Body of pancreas (tissue), 4 donors: ENCODE measurements at regions of chr6 and their contacts with region 1.

Region 1: DNA sequence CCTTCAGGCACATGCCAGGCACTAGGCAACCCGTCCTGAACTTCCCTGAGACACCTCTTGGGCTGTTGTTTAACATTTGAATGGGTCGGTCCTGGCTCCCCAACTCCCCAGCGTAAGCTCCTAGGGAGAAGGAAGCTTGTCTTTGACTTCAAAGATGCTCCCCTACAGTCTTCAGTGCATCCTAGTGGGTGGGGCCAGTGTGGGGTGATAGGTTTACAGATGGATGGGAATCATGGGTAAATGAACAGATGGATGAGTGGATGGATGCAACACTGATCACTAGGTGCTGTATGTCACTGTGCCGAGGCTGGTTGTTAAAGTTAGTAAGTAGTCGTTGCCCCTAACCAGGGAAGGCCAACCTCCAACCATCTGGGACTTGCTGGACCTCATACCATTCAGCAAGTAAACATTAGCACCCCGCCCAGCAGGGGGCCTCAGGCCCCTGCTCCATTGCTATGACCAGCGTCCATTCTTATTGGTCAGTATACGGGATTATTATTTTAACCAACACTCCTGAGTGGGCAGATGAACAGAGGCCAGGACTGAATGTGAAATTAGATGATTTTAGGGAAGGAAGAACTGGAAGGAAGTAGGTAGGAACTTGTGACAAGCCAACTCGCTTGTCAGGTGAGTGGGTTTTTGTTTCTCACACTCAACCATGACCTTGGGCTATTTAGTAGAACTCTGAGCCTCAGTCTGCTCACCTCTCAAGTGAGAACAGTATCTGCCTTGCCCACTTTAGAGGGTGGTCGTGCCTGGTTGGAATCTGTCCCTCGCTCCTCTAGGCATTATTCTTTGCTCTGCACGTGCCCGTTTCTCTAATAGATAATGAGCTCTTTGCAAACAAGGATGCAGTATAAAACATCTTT is 82.9 kb upstream of the FOXP4 start:
- DNase-seq: peak; percentile 79 to 88 (median 82)
- ATAC-seq: peak; percentile 92
- H3K4me3 ChIP-seq: no peak overlapping the region
- H3K27ac ChIP-seq: no peak overlapping the region
- H3K4me1 ChIP-seq: no peaks in the 10 kb centered on the region
- H3K27me3 ChIP-seq: no peaks in the 10 kb centered on the region
- CTCF ChIP-seq: peak; percentile 55 to 87 (median 73)
- POLR2A ChIP-seq: no peak

Region 2: DNA sequence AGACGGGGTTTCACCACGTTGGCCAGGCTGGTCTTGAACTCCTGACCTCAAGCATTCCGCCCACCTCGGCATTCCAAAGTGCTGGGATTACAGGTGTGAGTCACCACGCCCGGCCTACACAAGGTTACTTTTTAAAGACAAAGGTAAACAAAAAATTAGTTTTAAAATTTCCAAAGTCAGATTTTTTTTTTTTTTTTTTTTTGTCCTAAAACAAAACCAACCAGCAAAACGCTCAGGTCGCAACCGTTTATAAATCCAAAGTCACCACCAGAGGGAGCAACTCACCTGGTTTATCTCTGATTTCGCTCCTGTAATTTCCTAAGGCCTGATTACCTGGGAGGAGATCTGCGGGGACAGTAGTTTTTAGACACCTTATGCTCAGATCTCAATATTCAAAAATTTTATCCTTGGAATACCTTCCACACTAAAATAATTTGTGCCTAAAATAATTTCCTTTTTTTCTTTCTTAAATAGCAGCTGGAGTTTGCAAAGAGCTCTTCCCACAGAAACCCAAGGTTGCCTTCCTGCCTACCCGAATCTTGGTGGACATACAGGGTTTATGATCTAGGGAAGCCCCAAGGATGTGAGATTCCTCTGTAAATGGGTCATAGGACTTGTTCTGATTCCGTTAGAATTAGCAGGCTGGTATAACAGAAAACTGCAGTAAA is 157.0 kb before region 1 on chr6:
- intact Hi-C with region 1: no loop called
- DNase-seq: peak; percentile 57 to 74 (median 68)
- ATAC-seq: peak; percentile 66
- H3K4me3 ChIP-seq: no peak overlapping the region
- H3K27ac ChIP-seq: no peak overlapping the region
- H3K4me1 ChIP-seq: no peaks in the 10 kb centered on the region
- H3K27me3 ChIP-seq: no peaks in the 10 kb centered on the region
- CTCF ChIP-seq: peak; percentile 43 to 74 (median 62)
- POLR2A ChIP-seq: no peak

Region 3: GRCh38 chr6:41591859-41592502 is 128.7 kb after region 1 on chr6:
- intact Hi-C with region 1: loop called (anchors 5 kb)
- DNase-seq: peak; percentile 71 to 82 (median 78)
- ATAC-seq: peak; percentile 75
- H3K4me3 ChIP-seq: no peak overlapping the region
- H3K27ac ChIP-seq: no peak overlapping the region
- H3K4me1 ChIP-seq: no peaks in the 10 kb centered on the region
- H3K27me3 ChIP-seq: no peaks in the 10 kb centered on the region
- CTCF ChIP-seq: peak; percentile 85 to 98 (median 91)
- POLR2A ChIP-seq: no peak

Region 4: DNA sequence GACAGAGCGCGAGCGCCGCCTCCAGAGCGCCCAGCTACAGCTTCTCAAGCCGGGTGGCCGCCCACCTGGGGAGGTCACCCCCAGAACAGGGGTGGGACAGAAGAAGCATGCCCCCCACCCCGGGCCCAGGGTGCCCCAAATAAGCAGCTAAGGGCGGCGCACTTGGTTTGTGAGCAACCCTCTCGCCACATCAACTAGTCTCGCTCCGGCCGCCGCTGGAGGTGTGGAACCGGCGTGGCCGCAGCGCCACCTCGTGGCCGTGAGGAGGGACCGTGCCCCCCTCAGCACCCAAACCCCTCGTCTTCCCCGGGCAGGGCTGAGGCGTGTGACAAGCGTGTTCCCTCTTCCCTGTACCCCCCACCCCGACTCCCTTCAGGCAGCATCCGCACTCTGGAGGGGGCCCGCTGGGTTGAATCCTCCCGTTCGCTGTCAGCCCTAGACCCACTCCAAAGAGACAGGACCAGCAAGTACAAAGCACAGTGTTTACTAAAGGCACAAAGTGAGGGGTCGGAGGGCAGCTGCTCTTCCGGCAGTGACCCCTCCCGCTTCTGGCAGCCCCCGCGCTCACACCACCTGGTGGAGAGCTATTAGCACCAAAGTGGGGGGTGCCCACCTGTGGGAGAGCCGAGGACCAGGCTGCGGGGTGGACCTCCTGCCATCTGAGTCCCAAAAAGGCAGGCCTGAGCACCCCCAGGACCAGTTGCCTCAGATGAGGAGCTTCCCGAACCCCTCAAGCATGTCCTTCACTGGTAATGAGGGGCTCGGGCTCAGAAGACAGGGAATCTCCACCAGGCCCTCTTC is 220.4 kb after region 1 on chr6:
- intact Hi-C with region 1: loop called (anchors 10 kb)
- DNase-seq: peak; percentile 65 to 79 (median 76)
- ATAC-seq: peak; percentile 41
- H3K4me3 ChIP-seq: no peak overlapping the region
- H3K27ac ChIP-seq: peak overlapping the region in 1 of 4 donors; percentile 24
- H3K4me1 ChIP-seq: peaks cover 16% of the 10 kb centered on the region
- H3K27me3 ChIP-seq: no peaks in the 10 kb centered on the region
- CTCF ChIP-seq: peak; percentile 77 to 83 (median 79)
- POLR2A ChIP-seq: no peak